ENCODE measurements at regions of chr7 and their contacts with region 1.

Region 1: GRCh38 chr7:85554236-85555178 is 367.7 kb upstream of the SEMA3D start:
- DNase-seq: peak; percentile 6 to 55
- H3K4me3 ChIP-seq: no peak overlapping the region
- H3K27ac ChIP-seq: no peak overlapping the region
- H3K4me1 ChIP-seq: no peaks in the 10 kb centered on the region
- H3K27me3 ChIP-seq: no peaks in the 10 kb centered on the region
- CTCF ChIP-seq: peak; percentile 83

Region 2: GRCh38 chr7:85186521-85187241 is 367.8 kb before region 1 on chr7 and contains the start of gene SEMA3D:
- CTCF ChIA-PET with region 1: no interaction called
- POLR2A ChIA-PET with region 1: no interaction called
- intact Hi-C with region 1: loop called (anchors 5 kb)
- DNase-seq: peak; percentile 34 to 85
- H3K4me3 ChIP-seq: peak within 1 kb of the TSS; percentile 63
- H3K27ac ChIP-seq: no peak within 1 kb of the TSS
- H3K4me1 ChIP-seq: no peaks in the 10 kb centered on the region
- H3K27me3 ChIP-seq: peaks cover 13% of the 10 kb centered on the region; the same call in 1 of the 2 replicates
- CTCF ChIP-seq: peak; percentile 74
- total RNA-seq, gene SEMA3D: 2.6 and 4.8 TPM in 2 replicates